Ascending aorta (tissue), 2 donors: ENCODE measurements at regions of chr2 and their contacts with region 1.

Region 1: DNA sequence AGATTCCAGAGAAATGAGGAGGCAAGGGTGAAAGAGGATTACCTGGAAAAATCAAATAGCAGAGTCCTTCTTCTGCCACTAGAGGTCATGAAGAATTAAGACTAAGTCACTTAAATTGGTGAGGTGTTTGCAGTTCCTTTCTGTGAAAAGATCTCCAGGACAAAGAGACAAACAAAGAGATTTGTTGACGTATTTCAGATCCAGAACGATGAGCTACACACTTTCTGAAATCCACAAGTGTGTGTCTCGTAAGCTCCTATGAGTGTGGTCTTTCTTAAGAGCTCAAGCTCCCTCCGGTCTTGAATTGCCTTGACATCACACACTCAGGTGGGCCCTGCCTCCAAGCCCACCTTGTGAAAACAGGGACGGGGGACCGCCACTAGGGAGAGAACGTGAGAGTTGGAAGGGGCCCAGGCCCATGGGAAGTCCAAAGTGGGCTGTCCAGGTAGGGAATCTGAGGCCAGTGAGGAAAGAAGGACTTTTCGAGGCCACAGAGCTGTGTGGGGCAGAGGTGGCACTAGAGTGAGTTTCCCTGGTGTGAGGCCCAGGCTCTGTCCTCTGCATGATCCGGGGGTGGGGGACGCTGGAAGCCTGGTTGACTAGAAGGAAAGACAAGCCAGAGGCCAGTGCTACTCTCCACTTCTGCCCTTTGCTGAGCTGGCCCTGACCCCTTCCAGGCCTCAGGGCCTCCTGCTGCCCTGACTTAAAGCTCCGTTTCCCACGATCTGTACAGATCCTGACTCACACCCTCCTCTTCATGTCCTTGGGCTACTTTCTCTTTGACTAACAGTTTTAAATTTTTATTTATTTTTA is 168.1 kb upstream of the NCK2 start:
- DNase-seq: no peak
- H3K4me3 ChIP-seq: no peak overlapping the region
- H3K27ac ChIP-seq: no peak overlapping the region
- H3K4me1 ChIP-seq: peaks cover 0 to 4% of the 10 kb centered on the region in 2 donors
- H3K27me3 ChIP-seq: no peaks in the 10 kb centered on the region
- CTCF ChIP-seq: peak; percentile 44 to 70 (median 46)

Region 2: GRCh38 chr2:105183555-105184323 is 392.9 kb before region 1 on chr2:
- intact Hi-C with region 1: no loop called
- DNase-seq: no peak
- H3K4me3 ChIP-seq: no peak overlapping the region
- H3K27ac ChIP-seq: no peak overlapping the region
- H3K4me1 ChIP-seq: no peaks in the 10 kb centered on the region
- H3K27me3 ChIP-seq: no peaks in the 10 kb centered on the region
- CTCF ChIP-seq: no peak

Region 3: DNA sequence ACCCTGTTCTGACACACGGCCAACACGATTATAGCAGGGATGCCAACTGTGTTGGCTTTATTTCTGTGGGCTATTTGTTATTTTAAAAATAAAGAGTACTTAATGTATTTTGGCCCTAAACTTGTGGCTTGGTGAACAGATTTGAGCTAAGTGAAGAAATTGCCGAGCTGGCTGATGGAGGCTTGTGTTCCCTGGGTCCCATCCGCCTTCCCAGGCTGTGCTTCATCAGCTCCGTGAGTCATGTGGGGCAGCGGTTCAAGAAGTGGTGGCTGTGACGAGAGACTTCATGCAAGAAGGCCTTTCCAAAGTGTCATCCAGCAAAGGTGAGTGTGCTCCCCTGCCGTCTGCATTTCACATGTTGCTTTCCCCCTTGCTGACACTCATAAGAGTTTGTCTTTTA is 94.5 kb after region 1 on chr2:
- intact Hi-C with region 1: loop called (anchors 10 kb)
- DNase-seq: peak; percentile 26 to 80
- H3K4me3 ChIP-seq: no peak overlapping the region
- H3K27ac ChIP-seq: peak overlapping the region; percentile 29 to 37
- H3K4me1 ChIP-seq: peaks cover 0 to 8% of the 10 kb centered on the region in 2 donors
- H3K27me3 ChIP-seq: no peaks in the 10 kb centered on the region
- CTCF ChIP-seq: no peak

Region 4: GRCh38 chr2:105744091-105744908 is 167.7 kb after region 1 on chr2:
- intact Hi-C with region 1: loop called (anchors 2 kb)
- DNase-seq: peak in 1 of 2 donors; percentile 76
- H3K4me3 ChIP-seq: peak overlapping the region; percentile 77 to 96
- H3K27ac ChIP-seq: peak overlapping the region; percentile 89 to 94
- H3K4me1 ChIP-seq: peaks cover 7 to 23% of the 10 kb centered on the region in 2 donors
- H3K27me3 ChIP-seq: no peaks in the 10 kb centered on the region
- CTCF ChIP-seq: no peak

Region 5: GRCh38 chr2:105888625-105889400 is 312.2 kb after region 1 on chr2:
- intact Hi-C with region 1: loop called (anchors 5 kb)
- DNase-seq: no peak
- H3K4me3 ChIP-seq: no peak overlapping the region
- H3K27ac ChIP-seq: peak overlapping the region; percentile 65 to 69
- H3K4me1 ChIP-seq: peaks cover 0 to 43% of the 10 kb centered on the region in 2 donors
- H3K27me3 ChIP-seq: no peaks in the 10 kb centered on the region
- CTCF ChIP-seq: no peak

Region 6: GRCh38 chr2:105904938-105905337 is 328.3 kb after region 1 on chr2:
- intact Hi-C with region 1: no loop called
- DNase-seq: no peak
- H3K4me3 ChIP-seq: no peak overlapping the region
- H3K27ac ChIP-seq: no peak overlapping the region
- H3K4me1 ChIP-seq: peaks cover 0 to 9% of the 10 kb centered on the region in 2 donors
- H3K27me3 ChIP-seq: no peaks in the 10 kb centered on the region
- CTCF ChIP-seq: no peak

Region 7: GRCh38 chr2:106065268-106065982 is 488.8 kb after region 1 on chr2:
- intact Hi-C with region 1: loop called (anchors 10 kb)
- DNase-seq: no peak
- H3K4me3 ChIP-seq: peak overlapping the region; percentile 54 to 91
- H3K27ac ChIP-seq: peak overlapping the region in 1 of 2 donors; percentile 35
- H3K4me1 ChIP-seq: peaks cover 4 to 5% of the 10 kb centered on the region in 2 donors
- H3K27me3 ChIP-seq: no peaks in the 10 kb centered on the region
- CTCF ChIP-seq: no peak

Region 8: DNA sequence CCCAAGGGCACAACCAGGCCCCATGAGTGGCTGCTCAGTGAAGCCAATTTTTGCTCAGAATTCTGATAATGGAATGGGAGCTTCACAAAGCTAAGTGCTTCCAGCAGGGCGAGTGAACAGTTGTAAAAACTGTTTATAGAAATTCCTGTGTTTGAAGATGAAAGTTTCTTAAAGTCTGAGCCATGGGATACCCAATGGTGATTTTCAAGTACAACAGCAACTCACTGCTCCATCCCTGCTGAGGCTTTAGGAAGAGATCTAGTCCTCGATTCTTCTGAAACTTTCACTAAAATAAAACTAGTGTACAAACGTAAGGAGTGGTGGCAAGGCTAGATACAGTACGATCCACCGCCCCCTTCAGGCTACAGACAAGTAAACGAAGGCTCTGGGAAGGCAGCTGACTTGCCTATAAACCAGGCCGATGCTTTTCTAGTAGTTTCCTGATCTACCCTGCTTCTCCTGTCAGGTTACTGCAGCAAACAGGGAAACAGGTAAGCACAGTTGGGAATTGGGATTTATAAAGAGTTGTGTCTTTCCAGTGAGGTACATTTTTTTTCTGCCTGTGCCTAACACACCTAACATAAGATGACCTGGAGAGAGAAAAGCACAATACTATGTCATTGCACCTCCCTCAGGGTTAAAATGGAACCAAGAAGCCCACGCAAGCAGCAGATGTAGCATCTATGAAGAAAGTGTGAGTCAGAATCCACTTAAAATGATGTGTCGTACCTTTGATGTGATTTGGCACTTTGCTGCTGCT is 508.7 kb after region 1 on chr2:
- intact Hi-C with region 1: loop called (anchors 2 kb)
- DNase-seq: no peak
- H3K4me3 ChIP-seq: no peak overlapping the region
- H3K27ac ChIP-seq: no peak overlapping the region
- H3K4me1 ChIP-seq: no peaks in the 10 kb centered on the region
- H3K27me3 ChIP-seq: no peaks in the 10 kb centered on the region
- CTCF ChIP-seq: peak; percentile 25 to 41 (median 29)